ENCODE measurements at regions of chr3 and their contacts with region 1.

Region 1: GRCh38 chr3:131283862-131284261 is 97.7 kb upstream of the NUDT16 start:
- DNase-seq: no peak
- ATAC-seq: peak in 1 of 4 donors; percentile 38
- H3K4me3 ChIP-seq: no peak overlapping the region
- H3K27ac ChIP-seq: no peak overlapping the region
- H3K4me1 ChIP-seq: peaks cover 32% of the 10 kb centered on the region
- H3K27me3 ChIP-seq: no peaks in the 10 kb centered on the region
- CTCF ChIP-seq: no peak

Region 2: GRCh38 chr3:131349946-131350347 is 66.1 kb after region 1 on chr3:
- intact Hi-C with region 1: loop called in 1 of 2 experiments (anchors 5 kb)
- DNase-seq: peak in 1 of 2 donors; percentile 20
- ATAC-seq: peak in 1 of 4 donors; percentile 44
- H3K4me3 ChIP-seq: no peak overlapping the region
- H3K27ac ChIP-seq: no peak overlapping the region
- H3K4me1 ChIP-seq: peaks cover 29% of the 10 kb centered on the region
- H3K27me3 ChIP-seq: no peaks in the 10 kb centered on the region
- CTCF ChIP-seq: no peak

Measured in psoas muscle (tissue), 8 donors.